ENCODE measurements at regions of chr3 and their contacts with region 1.

Region 1: GRCh38 chr3:48188266-48189201 is at the start of gene CDC25A:
- DNase-seq: peak; percentile 97 to 99
- H3K4me3 ChIP-seq: peak within 1 kb of the TSS; percentile 95
- H3K4me3 Mint-ChIP-seq: peak within 1 kb of the TSS; percentile 95
- H3K27ac Mint-ChIP-seq: peak within 1 kb of the TSS; percentile 90
- H3K4me1 ChIP-seq: peaks cover 9% of the 10 kb centered on the region; the same call in 1 of the 2 replicates
- H3K4me1 Mint-ChIP-seq: peaks cover 6% of the 10 kb centered on the region
- H3K27me3 ChIP-seq: no peaks in the 10 kb centered on the region
- H3K27me3 Mint-ChIP-seq: no peaks in the 10 kb centered on the region
- CTCF ChIP-seq: no peak
- total RNA-seq, gene CDC25A: 32.1 and 35.5 TPM in 2 replicates

Region 2: GRCh38 chr3:48240711-48241491 is 52.4 kb after region 1 on chr3 and contains the start of gene ZNF589:
- CTCF ChIA-PET with region 1: interaction called, 11 read pairs
- POLR2A ChIA-PET with region 1: no interaction called
- intact Hi-C with region 1: no loop called
- DNase-seq: peak; percentile 94 to 95
- H3K4me3 ChIP-seq: peak within 1 kb of the TSS; percentile 58
- H3K4me3 Mint-ChIP-seq: peak within 1 kb of the TSS; percentile 85
- H3K27ac Mint-ChIP-seq: peak within 1 kb of the TSS; percentile 77
- H3K4me1 ChIP-seq: peaks cover 15% of the 10 kb centered on the region
- H3K4me1 Mint-ChIP-seq: no peaks in the 10 kb centered on the region
- H3K27me3 ChIP-seq: no peaks in the 10 kb centered on the region
- H3K27me3 Mint-ChIP-seq: no peaks in the 10 kb centered on the region
- CTCF ChIP-seq: peak in 1 of 2 experiments; percentile 40
- total RNA-seq, gene ZNF589: 9.7 and 10.9 TPM in 2 replicates

Region 3: GRCh38 chr3:48429317-48429959 is 240.9 kb after region 1 on chr3:
- CTCF ChIA-PET with region 1: no interaction called
- POLR2A ChIA-PET with region 1: interaction called, 10 read pairs
- intact Hi-C with region 1: no loop called
- DNase-seq: peak; percentile 87
- H3K4me3 ChIP-seq: peak overlapping the region; percentile 84
- H3K4me3 Mint-ChIP-seq: peak overlapping the region; percentile 98
- H3K27ac Mint-ChIP-seq: no peak overlapping the region
- H3K4me1 ChIP-seq: peaks cover 65% of the 10 kb centered on the region
- H3K4me1 Mint-ChIP-seq: peaks cover 52% of the 10 kb centered on the region
- H3K27me3 ChIP-seq: no peaks in the 10 kb centered on the region
- H3K27me3 Mint-ChIP-seq: no peaks in the 10 kb centered on the region
- CTCF ChIP-seq: no peak